Activated CD4-positive, alpha-beta memory T cell treated with anti-CD3 and anti-CD28 coated beads for 36 hours (primary cell): ENCODE measurements at regions of chr10 and their contacts with region 1.

Region 1: DNA sequence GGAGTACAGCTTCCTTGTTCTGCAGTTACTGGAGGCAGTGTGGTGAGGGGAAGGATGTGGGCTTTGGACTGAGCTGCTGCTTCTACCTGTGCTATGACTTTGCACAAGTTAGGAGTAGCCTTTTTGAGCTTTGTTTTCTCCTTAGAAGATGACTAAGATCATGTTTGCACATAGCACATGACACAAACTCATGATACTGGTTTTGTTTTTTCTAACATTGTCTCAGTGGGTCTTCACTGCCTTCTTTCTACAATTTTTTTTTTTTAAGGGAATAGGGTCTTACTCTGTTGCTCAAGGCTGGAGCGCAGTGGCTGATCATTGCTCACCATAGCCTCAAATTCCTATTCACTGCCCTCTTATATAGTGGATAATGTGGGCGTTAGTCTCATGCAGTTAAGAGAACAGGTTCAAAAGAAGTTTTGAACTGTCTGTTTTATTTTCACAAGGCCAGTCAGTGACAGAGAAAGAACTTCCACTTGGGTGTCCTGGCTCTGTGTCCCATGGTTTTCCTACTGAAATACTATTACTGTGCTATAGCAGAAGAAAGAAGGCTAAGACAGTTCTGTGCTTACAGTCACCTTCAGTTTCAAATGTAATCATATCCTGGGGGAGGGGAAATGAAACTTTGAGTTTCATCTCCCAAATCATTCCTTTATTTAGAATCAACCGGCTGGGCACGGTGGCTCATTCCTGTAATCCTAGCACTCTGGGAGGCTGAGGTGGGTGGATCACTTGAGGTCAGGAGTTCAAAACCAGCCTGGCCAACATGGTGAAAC is 72.0 kb downstream of the KAT6B start:
- DNase-seq: peak; percentile 69
- H3K4me3 Mint-ChIP-seq: peak overlapping the region; percentile 10
- H3K27ac Mint-ChIP-seq: peak overlapping the region; percentile 84
- H3K4me1 Mint-ChIP-seq: peaks cover 55% of the 10 kb centered on the region
- H3K27me3 Mint-ChIP-seq: no peaks in the 10 kb centered on the region

Region 2: DNA sequence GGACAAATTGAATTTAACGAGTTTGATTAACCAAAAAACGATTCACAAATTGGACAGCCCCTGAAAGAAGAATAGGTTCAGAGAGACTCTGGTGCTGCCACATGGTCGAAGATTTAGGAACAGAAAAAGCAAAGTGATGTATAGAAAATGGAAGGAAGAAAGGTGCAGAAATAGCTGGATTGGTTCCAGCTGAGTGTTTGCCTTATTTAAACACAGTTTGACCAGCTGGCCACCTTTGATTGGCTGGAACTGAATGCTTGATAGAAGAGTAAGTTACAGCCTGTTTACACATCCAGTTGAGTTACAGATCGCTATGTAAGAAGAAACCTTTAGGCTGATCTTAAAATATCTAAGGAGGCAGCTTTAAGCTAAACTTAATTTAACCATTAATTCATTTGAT is 112.3 kb before region 1 on chr10:
- CTCF ChIA-PET with region 1: no interaction called
- POLR2A ChIA-PET with region 1: no interaction called
- intact Hi-C with region 1: no loop called
- DNase-seq: no peak
- H3K4me3 Mint-ChIP-seq: no peak overlapping the region
- H3K27ac Mint-ChIP-seq: no peak overlapping the region
- H3K4me1 Mint-ChIP-seq: no peaks in the 10 kb centered on the region
- H3K27me3 Mint-ChIP-seq: no peaks in the 10 kb centered on the region

Region 3: GRCh38 chr10:74854610-74855009 is 43.8 kb before region 1 on chr10:
- CTCF ChIA-PET with region 1: no interaction called
- POLR2A ChIA-PET with region 1: no interaction called
- intact Hi-C with region 1: loop called (anchors 1 kb)
- DNase-seq: no peak
- H3K4me3 Mint-ChIP-seq: no peak overlapping the region
- H3K27ac Mint-ChIP-seq: peak overlapping the region; percentile 38
- H3K4me1 Mint-ChIP-seq: peaks cover 36% of the 10 kb centered on the region
- H3K27me3 Mint-ChIP-seq: no peaks in the 10 kb centered on the region

Region 4: DNA sequence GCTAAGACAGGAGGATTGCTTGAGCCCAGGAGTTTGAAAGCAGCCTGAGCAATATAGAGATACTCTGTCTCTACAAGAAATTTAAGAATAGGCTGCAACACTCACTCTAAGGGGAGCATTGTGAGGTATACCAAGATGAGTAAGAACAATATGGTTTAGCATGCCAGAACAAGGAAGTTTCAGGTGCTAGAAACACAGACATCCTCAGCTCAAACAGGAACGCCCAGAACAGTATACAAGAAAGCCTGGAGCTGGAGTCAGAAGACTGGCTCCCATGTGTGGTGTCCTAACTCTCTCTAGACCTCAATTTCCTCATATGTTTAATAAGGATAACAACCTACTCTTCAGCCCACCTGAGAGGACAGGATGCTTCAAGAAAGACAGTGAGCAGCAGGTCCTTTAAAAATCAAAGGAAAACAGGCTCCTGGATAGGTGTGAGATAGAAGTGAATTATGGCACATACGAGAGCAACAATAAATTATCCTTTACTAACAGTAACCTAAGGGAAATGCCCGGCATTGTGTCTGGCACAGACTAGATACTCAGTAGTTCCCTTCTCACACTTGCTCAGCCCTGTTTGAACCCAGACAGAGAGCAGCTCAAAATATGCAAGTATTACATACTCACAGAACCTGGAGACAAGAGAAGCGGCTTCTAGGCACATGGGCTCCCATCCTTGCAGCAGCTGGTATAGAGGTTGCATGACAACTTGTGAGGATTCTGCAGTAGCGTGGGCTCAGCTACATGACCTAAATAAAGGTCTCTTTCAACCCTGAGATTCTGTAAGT is 26.6 kb before region 1 on chr10:
- CTCF ChIA-PET with region 1: no interaction called
- POLR2A ChIA-PET with region 1: interaction called, 3 read pairs
- intact Hi-C with region 1: loop called (anchors 1 kb)
- DNase-seq: peak; percentile 28
- H3K4me3 Mint-ChIP-seq: peak overlapping the region; percentile 32
- H3K27ac Mint-ChIP-seq: peak overlapping the region; percentile 45
- H3K4me1 Mint-ChIP-seq: peaks cover 45% of the 10 kb centered on the region
- H3K27me3 Mint-ChIP-seq: no peaks in the 10 kb centered on the region

Region 5: GRCh38 chr10:74921744-74922143 is 23.4 kb after region 1 on chr10:
- CTCF ChIA-PET with region 1: no interaction called
- POLR2A ChIA-PET with region 1: no interaction called
- intact Hi-C with region 1: no loop called
- DNase-seq: no peak
- H3K4me3 Mint-ChIP-seq: no peak overlapping the region
- H3K27ac Mint-ChIP-seq: no peak overlapping the region
- H3K4me1 Mint-ChIP-seq: peaks cover 28% of the 10 kb centered on the region
- H3K27me3 Mint-ChIP-seq: no peaks in the 10 kb centered on the region

Region 6: GRCh38 chr10:74977913-74978847 is 79.8 kb after region 1 on chr10:
- CTCF ChIA-PET with region 1: no interaction called
- POLR2A ChIA-PET with region 1: no interaction called
- intact Hi-C with region 1: loop called (anchors 5 kb)
- DNase-seq: peak; percentile 71
- H3K4me3 Mint-ChIP-seq: no peak overlapping the region
- H3K27ac Mint-ChIP-seq: no peak overlapping the region
- H3K4me1 Mint-ChIP-seq: peaks cover 31% of the 10 kb centered on the region
- H3K27me3 Mint-ChIP-seq: no peaks in the 10 kb centered on the region

Region 7: GRCh38 chr10:75000748-75001321 is 102.4 kb after region 1 on chr10:
- CTCF ChIA-PET with region 1: no interaction called
- POLR2A ChIA-PET with region 1: no interaction called
- intact Hi-C with region 1: loop called (anchors 5 kb)
- DNase-seq: peak; percentile 46
- H3K4me3 Mint-ChIP-seq: peak overlapping the region; percentile 4
- H3K27ac Mint-ChIP-seq: peak overlapping the region; percentile 63
- H3K4me1 Mint-ChIP-seq: peaks cover 23% of the 10 kb centered on the region
- H3K27me3 Mint-ChIP-seq: no peaks in the 10 kb centered on the region